HEK293T (cell line): ENCODE measurements at regions of chr19 and their contacts with region 1.

Region 1: GRCh38 chr19:55461259-55461973 is at the start of gene ISOC2:
- DNase-seq: peak; percentile 96

Region 2: GRCh38 chr19:55446060-55446459 is 15.4 kb before region 1 on chr19:
- CTCF ChIA-PET with region 1: no interaction called
- POLR2A ChIA-PET with region 1: no interaction called
- DNase-seq: no peak

Region 3: DNA sequence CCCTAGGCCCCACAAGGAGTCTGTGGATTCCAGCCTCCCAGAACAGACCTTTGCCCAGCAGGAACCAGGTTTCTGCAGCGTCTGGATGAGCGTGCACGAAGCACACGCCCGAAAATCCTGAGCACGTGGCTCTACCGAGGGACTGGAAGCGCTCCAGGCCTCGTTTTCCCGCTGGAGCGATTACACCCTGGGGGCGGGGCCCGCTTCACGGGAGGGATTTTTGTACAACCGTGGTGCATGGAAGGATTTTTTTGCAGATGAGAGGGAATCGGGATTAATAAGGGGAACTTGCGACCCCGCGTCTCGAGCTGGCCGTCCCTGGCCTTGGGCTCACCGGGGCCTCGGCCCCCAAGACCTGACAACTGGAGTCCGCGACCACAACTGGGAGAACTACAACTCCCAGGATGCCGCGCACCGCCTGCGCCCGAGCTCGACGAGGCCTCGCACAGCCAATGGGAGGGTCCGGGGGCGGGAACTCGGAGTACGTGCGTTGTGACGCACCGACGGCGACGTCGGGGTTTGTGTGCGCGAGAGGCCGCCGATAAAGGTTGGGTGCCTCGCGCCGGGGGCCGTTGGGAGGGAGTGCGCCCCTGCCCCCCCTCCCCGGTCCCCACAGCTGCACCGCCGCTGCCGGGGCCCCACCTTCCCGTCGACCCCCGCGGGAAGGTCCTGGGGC is 14.8 kb after region 1 on chr19 and contains the start of gene ZNF628:
- CTCF ChIA-PET with region 1: no interaction called
- POLR2A ChIA-PET with region 1: interaction called, 17 read pairs
- DNase-seq: peak; percentile 95